Cardiac septum (tissue), 1 donor: ENCODE measurements at regions of chr5 and their contacts with region 1.

Region 1: DNA sequence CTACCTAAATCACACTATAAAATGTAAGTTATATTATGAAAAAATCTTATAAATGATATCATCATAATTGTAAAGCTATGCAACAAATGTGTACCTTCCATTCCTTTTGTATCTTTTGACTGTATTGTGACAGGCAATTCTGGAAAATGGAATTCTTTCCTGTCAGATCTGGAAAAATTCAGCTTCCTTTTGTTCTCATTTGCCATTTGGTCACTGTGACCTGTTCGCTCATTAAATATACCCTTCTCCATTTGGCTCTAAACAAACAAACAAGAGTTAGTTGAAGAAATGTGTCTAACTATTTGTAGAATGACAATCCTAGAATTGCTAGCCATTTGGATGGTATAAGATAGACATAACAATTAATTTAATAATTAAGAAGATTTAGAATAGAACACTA is 62.7 kb downstream of the CDKL3 start:
- DNase-seq: no peak

Region 2: GRCh38 chr5:134511788-134512650 is 207.7 kb after region 1 on chr5:
- intact Hi-C with region 1: no loop called
- DNase-seq: peak; percentile 84

Region 3: DNA sequence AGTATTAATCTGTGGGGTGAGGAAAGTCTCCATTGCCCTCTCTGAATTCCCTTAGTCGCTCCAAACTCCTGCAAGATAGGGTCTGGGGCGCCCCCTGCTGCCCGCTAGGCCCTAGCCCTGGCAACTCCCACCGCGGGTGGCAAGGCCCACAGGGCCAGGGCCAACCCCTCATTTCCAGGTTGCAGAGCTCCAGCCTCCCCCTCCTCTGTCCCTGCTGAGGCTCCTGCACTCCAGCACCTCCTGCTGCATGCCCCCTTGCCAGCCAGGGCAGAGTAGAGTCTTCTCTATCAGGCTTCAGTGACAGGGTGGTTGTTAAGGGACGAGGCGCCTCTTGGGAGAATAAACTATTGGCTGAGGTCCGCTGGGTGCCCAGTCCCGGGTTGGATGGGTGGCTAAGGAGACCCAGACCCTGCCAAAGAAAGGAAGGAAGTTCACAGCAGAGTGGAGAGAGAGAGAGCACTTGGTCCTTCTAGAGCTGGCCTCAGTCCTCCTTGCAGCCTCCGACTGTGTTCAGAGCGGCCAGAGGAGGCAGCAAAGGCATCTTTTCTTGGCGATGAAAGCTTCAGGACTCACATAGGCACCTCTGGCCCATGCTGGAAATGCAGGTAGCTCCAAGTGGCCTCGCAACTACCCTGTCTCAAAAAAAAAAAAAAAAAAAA is 282.7 kb after region 1 on chr5:
- intact Hi-C with region 1: loop called (anchors 2 kb)
- DNase-seq: peak; percentile 91